CD4-positive, alpha-beta memory T cell (primary cell): ENCODE measurements at regions of chr4 and their contacts with region 1.

Region 1: GRCh38 chr4:122716825-122717448 is 15.6 kb upstream of the BBS12 start:
- DNase-seq: peak; percentile 61 to 67 (median 65)
- H3K4me3 ChIP-seq: no peak overlapping the region
- H3K4me3 Mint-ChIP-seq: no peak overlapping the region
- H3K27ac ChIP-seq: no peak overlapping the region
- H3K27ac Mint-ChIP-seq: peak overlapping the region in 3 of 7 donors; percentile 1 to 63 (median 28)
- H3K4me1 ChIP-seq: peaks cover 5% of the 10 kb centered on the region
- H3K4me1 Mint-ChIP-seq: peaks cover 0 to 5% (median 2%) of the 10 kb centered on the region in 4 donors
- H3K27me3 ChIP-seq: no peaks in the 10 kb centered on the region
- H3K27me3 Mint-ChIP-seq: no peaks in the 10 kb centered on the region

Region 2: GRCh38 chr4:121900132-121900983 is 816.6 kb before region 1 on chr4:
- CTCF ChIA-PET with region 1: interaction called, 20 read pairs
- POLR2A ChIA-PET with region 1: no interaction called
- intact Hi-C with region 1: no loop called
- DNase-seq: peak; percentile 44 to 57 (median 49)
- H3K4me3 ChIP-seq: no peak overlapping the region
- H3K4me3 Mint-ChIP-seq: no peak overlapping the region
- H3K27ac ChIP-seq: no peak overlapping the region
- H3K27ac Mint-ChIP-seq: no peak overlapping the region
- H3K4me1 ChIP-seq: no peaks in the 10 kb centered on the region
- H3K4me1 Mint-ChIP-seq: peaks cover 0 to 8% (median 4%) of the 10 kb centered on the region in 4 donors
- H3K27me3 ChIP-seq: no peaks in the 10 kb centered on the region
- H3K27me3 Mint-ChIP-seq: peaks cover 2 to 7% of the 10 kb centered on the region in 2 donors

Region 3: GRCh38 chr4:122458625-122459024 is 258.3 kb before region 1 on chr4:
- CTCF ChIA-PET with region 1: no interaction called
- POLR2A ChIA-PET with region 1: no interaction called
- intact Hi-C with region 1: loop called (anchors 10 kb)
- DNase-seq: peak; percentile 45 to 70 (median 53)
- H3K4me3 ChIP-seq: peak overlapping the region; percentile 26 to 75
- H3K4me3 Mint-ChIP-seq: peak overlapping the region; percentile 84 to 90 (median 88)
- H3K27ac ChIP-seq: peak overlapping the region; percentile 42
- H3K27ac Mint-ChIP-seq: peak overlapping the region; percentile 81 to 95 (median 93)
- H3K4me1 ChIP-seq: peaks cover 55% of the 10 kb centered on the region
- H3K4me1 Mint-ChIP-seq: peaks cover 40 to 52% (median 46%) of the 10 kb centered on the region in 4 donors
- H3K27me3 ChIP-seq: no peaks in the 10 kb centered on the region
- H3K27me3 Mint-ChIP-seq: no peaks in the 10 kb centered on the region

Region 4: DNA sequence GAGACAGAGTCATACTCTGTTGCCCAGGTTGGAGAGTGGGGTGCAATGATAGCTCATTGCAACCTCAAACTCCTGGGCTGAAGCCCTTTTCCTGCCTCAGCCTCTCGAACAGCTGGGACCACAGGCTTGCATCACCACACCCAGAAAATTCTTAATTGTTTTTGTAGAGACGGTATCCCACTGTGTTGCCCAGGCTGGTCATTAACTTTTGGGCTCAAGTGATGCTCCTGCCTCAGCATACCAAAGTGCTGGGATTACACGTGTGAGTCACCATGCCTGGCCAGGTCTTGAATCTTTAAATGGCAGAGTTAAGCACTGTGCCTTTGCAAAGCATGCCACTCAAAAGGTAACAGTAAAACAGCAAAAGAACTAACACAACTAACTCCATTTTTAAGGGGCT is 13.1 kb before region 1 on chr4:
- CTCF ChIA-PET with region 1: interaction called, 12 read pairs
- POLR2A ChIA-PET with region 1: no interaction called
- intact Hi-C with region 1: no loop called
- DNase-seq: no peak
- H3K4me3 ChIP-seq: no peak overlapping the region
- H3K4me3 Mint-ChIP-seq: no peak overlapping the region
- H3K27ac ChIP-seq: no peak overlapping the region
- H3K27ac Mint-ChIP-seq: no peak overlapping the region
- H3K4me1 ChIP-seq: no peaks in the 10 kb centered on the region
- H3K4me1 Mint-ChIP-seq: peaks cover 0 to 6% (median 4%) of the 10 kb centered on the region in 4 donors
- H3K27me3 ChIP-seq: no peaks in the 10 kb centered on the region
- H3K27me3 Mint-ChIP-seq: peaks cover 0 to 15% of the 10 kb centered on the region in 2 donors

Region 5: GRCh38 chr4:122930862-122931261 is 213.9 kb after region 1 on chr4:
- CTCF ChIA-PET with region 1: interaction called, 14 read pairs
- POLR2A ChIA-PET with region 1: no interaction called
- intact Hi-C with region 1: no loop called
- DNase-seq: peak in 2 of 5 donors; percentile 19 to 26
- H3K4me3 ChIP-seq: no peak overlapping the region
- H3K4me3 Mint-ChIP-seq: no peak overlapping the region
- H3K27ac ChIP-seq: no peak overlapping the region
- H3K27ac Mint-ChIP-seq: no peak overlapping the region
- H3K4me1 ChIP-seq: peaks cover 6% of the 10 kb centered on the region
- H3K4me1 Mint-ChIP-seq: peaks cover 0 to 7% (median 2%) of the 10 kb centered on the region in 4 donors
- H3K27me3 ChIP-seq: no peaks in the 10 kb centered on the region
- H3K27me3 Mint-ChIP-seq: no peaks in the 10 kb centered on the region